ENCODE measurements at regions of chr1 and their contacts with region 1.

Region 1: DNA sequence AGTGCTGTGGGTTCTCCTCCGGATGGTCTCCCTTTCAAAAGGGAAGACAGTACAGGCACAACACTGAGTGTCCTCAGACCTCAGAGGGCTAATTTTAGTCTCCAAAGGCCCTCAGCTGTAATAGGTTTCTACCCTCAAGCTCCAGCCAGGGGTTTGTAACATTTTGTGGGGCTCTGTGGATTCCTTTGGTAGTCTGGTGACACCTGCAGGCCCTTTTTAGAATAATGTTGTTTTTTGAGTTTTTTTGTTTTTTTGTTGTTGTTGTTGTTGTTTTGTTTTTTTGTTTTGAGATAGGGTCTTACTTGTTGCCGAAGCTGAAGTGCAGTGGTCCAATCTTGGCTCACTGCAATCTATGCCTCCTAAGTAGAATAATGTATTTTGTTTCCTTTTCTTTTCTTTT is 15.0 kb upstream of the TMEM201 start:
- DNase-seq: peak in 1 of 2 experiments; percentile 17
- ATAC-seq: 0 out of 6 replicates have a peak, but pooled peaks of 1 of the 2 experiments have one; percentile 44
- H3K4me3 ChIP-seq: no peak overlapping the region
- H3K27ac ChIP-seq: no peak overlapping the region
- H3K4me1 ChIP-seq: no peaks in the 10 kb centered on the region
- CTCF ChIP-seq: peak; percentile 54
- EP300 ChIP-seq: no peak
- POLR2A ChIP-seq: no peak
- RAD21 ChIP-seq: peak; percentile 50 to 52; a peak in 4 of 5 replicates

Region 2: GRCh38 chr1:9481048-9481447 is 92.7 kb before region 1 on chr1:
- CTCF ChIA-PET with region 1: no interaction called
- POLR2A ChIA-PET with region 1: no interaction called
- DNase-seq: no peak
- ATAC-seq: no peak
- H3K4me3 ChIP-seq: no peak overlapping the region
- H3K27ac ChIP-seq: no peak overlapping the region
- H3K4me1 ChIP-seq: peaks cover 10% of the 10 kb centered on the region; the same call in 1 of the 3 replicates
- CTCF ChIP-seq: no peak
- EP300 ChIP-seq: no peak
- POLR2A ChIP-seq: no peak
- RAD21 ChIP-seq: no peak

Region 3: DNA sequence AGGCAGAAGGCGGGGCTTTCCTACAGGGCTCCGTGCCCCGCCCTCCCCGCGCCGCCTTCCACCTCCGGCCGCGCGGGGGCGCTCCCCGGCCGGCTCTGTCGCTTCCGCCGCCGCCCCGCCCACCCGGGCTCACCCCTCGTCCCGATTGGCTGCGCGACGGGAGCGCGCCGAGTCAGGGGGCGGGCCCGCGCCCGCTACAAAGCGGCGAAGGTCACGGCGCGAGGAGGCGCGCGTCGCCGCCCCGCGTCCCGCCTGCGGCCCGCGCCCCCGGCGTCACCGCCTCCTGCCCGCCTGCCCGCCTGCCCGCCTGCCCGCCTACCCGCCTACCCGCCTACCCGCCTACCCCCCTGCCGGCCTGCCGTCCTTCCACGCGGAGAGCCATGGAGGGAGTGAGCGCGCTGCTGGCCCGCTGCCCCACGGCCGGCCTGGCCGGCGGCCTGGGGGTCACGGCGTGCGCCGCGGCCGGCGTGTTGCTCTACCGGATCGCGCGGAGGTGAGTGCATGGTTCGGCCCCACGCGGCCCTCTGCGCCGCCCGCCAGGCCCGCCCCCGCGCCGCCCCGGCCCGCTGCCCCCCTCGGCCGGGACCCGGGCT is 14.9 kb after region 1 on chr1 and contains the start of gene TMEM201:
- CTCF ChIA-PET with region 1: interaction called, 14 read pairs
- POLR2A ChIA-PET with region 1: no interaction called
- DNase-seq: peak; percentile 66 to 84
- ATAC-seq: peak; percentile 82 to 87
- H3K4me3 ChIP-seq: peak within 1 kb of the TSS; percentile 83
- H3K27ac ChIP-seq: peak within 1 kb of the TSS; percentile 80 to 95
- H3K4me1 ChIP-seq: peaks cover 9% of the 10 kb centered on the region; the same call in 2 of the 3 replicates
- CTCF ChIP-seq: peak; percentile 77
- EP300 ChIP-seq: no peak
- POLR2A ChIP-seq: peak; percentile 29; the same call in 1 of the 2 replicates
- RAD21 ChIP-seq: peak in 1 of 2 experiments; percentile 38; a peak in 3 of 5 replicates
- polyA plus RNA-seq, gene TMEM201: 1.9 and 2.1 TPM in 2 replicates

Region 4: GRCh38 chr1:9629445-9630201 is 55.9 kb after region 1 on chr1:
- CTCF ChIA-PET with region 1: no interaction called
- POLR2A ChIA-PET with region 1: no interaction called
- DNase-seq: no peak
- ATAC-seq: no peak
- H3K4me3 ChIP-seq: no peak overlapping the region
- H3K27ac ChIP-seq: no peak overlapping the region
- H3K4me1 ChIP-seq: no peaks in the 10 kb centered on the region
- CTCF ChIP-seq: no peak
- EP300 ChIP-seq: no peak
- POLR2A ChIP-seq: no peak
- RAD21 ChIP-seq: no peak

Measured in A549 (cell line).